ENCODE measurements at regions of chr14 and their contacts with region 1.

Region 1: GRCh38 chr14:53929871-53930715 is 26.5 kb downstream of the BMP4 start:
- DNase-seq: no peak

Region 2: GRCh38 chr14:53943048-53943750 is 13.1 kb after region 1 on chr14:
- CTCF ChIA-PET with region 1: interaction called, 10 read pairs
- POLR2A ChIA-PET with region 1: no interaction called
- DNase-seq: no peak